A549 (cell line): ENCODE measurements at regions of chr17 and their contacts with region 1.

Region 1: GRCh38 chr17:64420143-64420971 is 28.6 kb upstream of the MILR1 start:
- DNase-seq: peak; percentile 85
- ATAC-seq: peak; percentile 90 to 91
- H3K4me3 ChIP-seq: no peak overlapping the region
- H3K27ac ChIP-seq: 0 out of 6 replicates have a peak overlapping the region, but pooled peaks of 1 of the 2 experiments have one; percentile 9
- H3K4me1 ChIP-seq: no peaks in the 10 kb centered on the region
- CTCF ChIP-seq: peak; percentile 97
- EP300 ChIP-seq: no peak
- POLR2A ChIP-seq: no peak
- RAD21 ChIP-seq: peak; percentile 95 to 96

Region 2: GRCh38 chr17:64320613-64321553 is 99.5 kb before region 1 on chr17:
- CTCF ChIA-PET with region 1: interaction called, 776 read pairs
- POLR2A ChIA-PET with region 1: no interaction called
- DNase-seq: peak; percentile 89 to 96
- ATAC-seq: peak; percentile 88 to 95
- H3K4me3 ChIP-seq: 0 out of 3 replicates have a peak overlapping the region, but pooled peaks have one; percentile 17
- H3K27ac ChIP-seq: peak overlapping the region; percentile 13 to 40; a peak in 2 of 6 replicates
- H3K4me1 ChIP-seq: no peaks in the 10 kb centered on the region
- CTCF ChIP-seq: peak; percentile 96
- EP300 ChIP-seq: no peak; a peak in 1 of 5 replicates
- POLR2A ChIP-seq: no peak
- RAD21 ChIP-seq: peak; percentile 83 to 87

Region 3: GRCh38 chr17:64343853-64344637 is 76.3 kb before region 1 on chr17:
- CTCF ChIA-PET with region 1: interaction called, 46 read pairs
- POLR2A ChIA-PET with region 1: no interaction called
- DNase-seq: peak; percentile 28 to 64
- ATAC-seq: peak; percentile 51 to 67; a peak in 5 of 6 replicates
- H3K4me3 ChIP-seq: no peak overlapping the region
- H3K27ac ChIP-seq: peak overlapping the region; percentile 13 to 59; a peak in 4 of 6 replicates
- H3K4me1 ChIP-seq: peaks cover 13% of the 10 kb centered on the region
- CTCF ChIP-seq: no peak
- EP300 ChIP-seq: no peak
- POLR2A ChIP-seq: no peak
- RAD21 ChIP-seq: no peak

Region 4: DNA sequence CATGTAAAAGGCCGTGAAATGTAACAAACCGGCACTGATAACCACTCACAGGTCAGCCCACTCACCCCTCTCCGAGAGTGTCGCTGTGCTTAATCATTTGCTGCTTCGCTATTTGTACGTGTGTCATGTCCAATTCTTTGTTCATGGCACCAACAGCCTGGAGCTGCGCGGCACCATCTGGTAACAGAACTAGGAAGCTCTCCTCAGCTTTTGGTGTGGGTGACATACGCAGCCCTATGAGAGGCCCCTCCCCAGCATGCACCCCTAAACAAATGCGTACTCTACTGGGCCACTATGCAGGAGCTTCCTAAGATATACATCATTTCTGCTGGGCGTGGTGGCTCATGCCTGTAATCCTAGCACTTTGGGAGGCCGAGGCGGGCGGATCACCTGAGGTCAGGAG is 27.4 kb before region 1 on chr17:
- CTCF ChIA-PET with region 1: interaction called, 39 read pairs
- POLR2A ChIA-PET with region 1: interaction called, 4 read pairs
- DNase-seq: no peak
- ATAC-seq: no peak
- H3K4me3 ChIP-seq: no peak overlapping the region
- H3K27ac ChIP-seq: no peak overlapping the region
- H3K4me1 ChIP-seq: peaks cover 12% of the 10 kb centered on the region
- CTCF ChIP-seq: no peak
- EP300 ChIP-seq: no peak
- POLR2A ChIP-seq: no peak
- RAD21 ChIP-seq: no peak

Region 5: GRCh38 chr17:64448665-64449512 is 28.5 kb after region 1 on chr17 and contains the start of gene MILR1:
- CTCF ChIA-PET with region 1: interaction called, 54 read pairs
- POLR2A ChIA-PET with region 1: no interaction called
- DNase-seq: peak; percentile 56 to 75
- ATAC-seq: peak; percentile 91 to 96
- H3K4me3 ChIP-seq: no peak within 1 kb of the TSS
- H3K27ac ChIP-seq: peak within 1 kb of the TSS; percentile 12 to 66
- H3K4me1 ChIP-seq: peaks cover 17% of the 10 kb centered on the region
- CTCF ChIP-seq: no peak
- EP300 ChIP-seq: no peak
- POLR2A ChIP-seq: no peak
- RAD21 ChIP-seq: no peak
- polyA plus RNA-seq, gene MILR1: 12.2 and 12.8 TPM in 2 replicates

Region 6: DNA sequence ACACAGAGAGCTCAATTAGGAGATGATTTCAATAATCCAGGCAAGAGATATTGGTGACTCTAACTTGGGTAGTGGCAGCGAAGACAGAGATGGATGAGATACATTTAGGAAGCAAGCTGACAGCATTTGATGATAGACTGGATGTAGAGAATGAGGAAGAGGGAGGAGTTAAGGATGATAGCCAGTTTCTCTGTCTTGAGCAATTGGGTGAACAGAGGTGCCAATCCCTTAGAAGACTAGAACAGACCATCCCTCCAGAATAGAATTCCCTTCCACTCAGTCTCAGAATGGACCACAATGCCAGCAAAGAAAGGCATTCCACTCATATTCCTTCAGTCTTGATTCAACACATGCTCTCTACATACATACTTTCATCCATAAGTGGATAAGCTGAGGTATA is 59.3 kb after region 1 on chr17:
- CTCF ChIA-PET with region 1: interaction called, 146 read pairs
- POLR2A ChIA-PET with region 1: no interaction called
- DNase-seq: no peak
- ATAC-seq: peak in 1 of 2 experiments; percentile 47; a peak in 2 of 6 replicates
- H3K4me3 ChIP-seq: no peak overlapping the region
- H3K27ac ChIP-seq: no peak overlapping the region
- H3K4me1 ChIP-seq: peaks cover 4% of the 10 kb centered on the region; the same call in 1 of the 3 replicates
- CTCF ChIP-seq: no peak
- EP300 ChIP-seq: no peak
- POLR2A ChIP-seq: no peak
- RAD21 ChIP-seq: no peak

Region 7: DNA sequence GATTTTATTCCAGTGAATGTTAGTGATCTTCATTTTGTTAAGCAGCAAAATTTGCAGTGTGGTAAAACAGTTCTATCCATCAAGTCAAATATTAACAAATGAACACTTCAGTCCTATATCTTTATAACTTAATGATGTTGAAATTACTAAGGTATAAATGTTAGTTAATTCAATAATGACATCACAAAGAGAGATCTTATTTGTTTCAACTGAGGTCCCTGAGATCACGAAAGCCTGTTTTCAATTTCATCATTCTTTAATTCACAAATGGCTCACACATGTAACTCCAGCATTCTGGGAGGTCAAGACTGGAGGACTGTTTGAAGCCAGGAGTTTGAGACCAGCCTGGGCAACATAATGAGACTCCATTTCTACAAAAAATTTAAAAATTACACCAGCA is 227.9 kb after region 1 on chr17:
- CTCF ChIA-PET with region 1: interaction called, 35 read pairs
- POLR2A ChIA-PET with region 1: no interaction called
- DNase-seq: no peak
- ATAC-seq: no peak
- H3K4me3 ChIP-seq: no peak overlapping the region
- H3K27ac ChIP-seq: peak overlapping the region in 1 of 2 experiments; percentile 26; a peak in 1 of 6 replicates
- H3K4me1 ChIP-seq: peaks cover 33% of the 10 kb centered on the region
- CTCF ChIP-seq: no peak
- EP300 ChIP-seq: no peak
- POLR2A ChIP-seq: no peak
- RAD21 ChIP-seq: no peak

Region 8: GRCh38 chr17:65100316-65101140 is 680.2 kb after region 1 on chr17:
- CTCF ChIA-PET with region 1: no interaction called
- POLR2A ChIA-PET with region 1: no interaction called
- DNase-seq: peak; percentile 80 to 83
- ATAC-seq: peak; percentile 89 to 95
- H3K4me3 ChIP-seq: peak overlapping the region; percentile 55
- H3K27ac ChIP-seq: peak overlapping the region; percentile 75 to 87
- H3K4me1 ChIP-seq: peaks cover 25% of the 10 kb centered on the region
- CTCF ChIP-seq: peak; percentile 98
- EP300 ChIP-seq: no peak
- POLR2A ChIP-seq: peak; percentile 46
- RAD21 ChIP-seq: peak; percentile 69 to 95